ENCODE measurements at regions of chr2 and their contacts with region 1.

Region 1: GRCh38 chr2:64203858-64204632 is 59.8 kb upstream of the PELI1 start:
- DNase-seq: peak; percentile 42
- ATAC-seq: peak; percentile 79
- H3K4me3 Mint-ChIP-seq: peak overlapping the region; percentile 83
- H3K27ac Mint-ChIP-seq: peak overlapping the region; percentile 93
- H3K4me1 Mint-ChIP-seq: peaks cover 72% of the 10 kb centered on the region
- H3K27me3 Mint-ChIP-seq: no peaks in the 10 kb centered on the region
- CTCF ChIP-seq: no peak

Region 2: DNA sequence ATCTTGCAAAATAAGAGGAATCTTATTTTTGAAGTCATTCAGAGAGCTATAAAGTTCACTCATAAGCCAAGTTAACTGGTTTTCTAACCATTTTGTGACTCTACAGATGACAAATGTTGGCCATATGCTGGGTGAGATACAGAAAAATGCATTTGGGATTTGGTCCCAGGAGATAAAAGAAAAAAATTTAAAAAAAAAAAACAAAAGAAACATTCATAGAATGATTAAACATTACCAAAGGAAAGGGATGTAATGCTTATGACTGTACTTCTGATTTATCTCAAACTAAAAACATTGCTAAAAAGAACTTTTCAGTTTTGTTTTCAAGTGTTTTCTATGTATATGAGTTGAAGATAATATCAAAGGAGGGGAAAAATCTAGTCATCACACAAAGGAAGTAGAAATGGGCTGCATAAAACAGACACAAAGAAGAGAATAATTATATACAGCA is 102.9 kb before region 1 on chr2:
- CTCF ChIA-PET with region 1: no interaction called
- POLR2A ChIA-PET with region 1: interaction called, 11 read pairs
- intact Hi-C with region 1: no loop called
- DNase-seq: no peak
- ATAC-seq: no peak
- H3K4me3 Mint-ChIP-seq: peak overlapping the region; percentile 41
- H3K27ac Mint-ChIP-seq: peak overlapping the region; percentile 75
- H3K4me1 Mint-ChIP-seq: peaks cover 63% of the 10 kb centered on the region
- H3K27me3 Mint-ChIP-seq: no peaks in the 10 kb centered on the region
- CTCF ChIP-seq: no peak

Region 3: DNA sequence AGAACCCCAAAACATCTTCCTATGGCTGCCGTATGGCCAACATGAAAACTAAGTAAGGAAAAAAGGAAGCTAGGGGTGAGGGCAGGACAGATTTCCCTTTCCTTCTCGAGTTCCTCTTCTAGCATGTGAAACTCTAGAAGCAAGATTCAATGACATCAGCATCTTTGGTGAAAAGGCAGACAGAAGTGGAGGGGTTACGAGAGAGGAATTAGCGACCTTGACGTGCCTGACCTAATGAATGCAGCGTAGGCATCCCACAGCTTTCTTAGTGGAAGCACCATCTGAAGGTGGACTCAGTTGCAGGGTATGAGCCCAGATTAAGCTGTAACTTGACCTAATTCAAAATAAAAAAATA is 11.9 kb before region 1 on chr2:
- CTCF ChIA-PET with region 1: interaction called, 4 read pairs
- POLR2A ChIA-PET with region 1: interaction called, 8 read pairs
- intact Hi-C with region 1: loop called (anchors 2 kb)
- DNase-seq: no peak
- ATAC-seq: peak; percentile 83
- H3K4me3 Mint-ChIP-seq: peak overlapping the region; percentile 50
- H3K27ac Mint-ChIP-seq: peak overlapping the region; percentile 50
- H3K4me1 Mint-ChIP-seq: peaks cover 41% of the 10 kb centered on the region
- H3K27me3 Mint-ChIP-seq: no peaks in the 10 kb centered on the region
- CTCF ChIP-seq: no peak

Region 4: GRCh38 chr2:64222351-64222750 is 18.3 kb after region 1 on chr2:
- CTCF ChIA-PET with region 1: no interaction called
- POLR2A ChIA-PET with region 1: interaction called, 14 read pairs
- intact Hi-C with region 1: no loop called
- DNase-seq: no peak
- ATAC-seq: no peak
- H3K4me3 Mint-ChIP-seq: no peak overlapping the region
- H3K27ac Mint-ChIP-seq: peak overlapping the region; percentile 95
- H3K4me1 Mint-ChIP-seq: peaks cover 63% of the 10 kb centered on the region
- H3K27me3 Mint-ChIP-seq: no peaks in the 10 kb centered on the region
- CTCF ChIP-seq: no peak

Region 5: GRCh38 chr2:64228126-64228678 is 24.2 kb after region 1 on chr2:
- CTCF ChIA-PET with region 1: no interaction called
- POLR2A ChIA-PET with region 1: interaction called, 14 read pairs
- intact Hi-C with region 1: no loop called
- DNase-seq: peak; percentile 67
- ATAC-seq: peak; percentile 96
- H3K4me3 Mint-ChIP-seq: peak overlapping the region; percentile 93
- H3K27ac Mint-ChIP-seq: peak overlapping the region; percentile 91
- H3K4me1 Mint-ChIP-seq: peaks cover 35% of the 10 kb centered on the region
- H3K27me3 Mint-ChIP-seq: no peaks in the 10 kb centered on the region
- CTCF ChIP-seq: no peak

Region 6: GRCh38 chr2:64337314-64337713 is 133.3 kb after region 1 on chr2:
- CTCF ChIA-PET with region 1: no interaction called
- POLR2A ChIA-PET with region 1: no interaction called
- intact Hi-C with region 1: no loop called
- DNase-seq: no peak
- ATAC-seq: no peak
- H3K4me3 Mint-ChIP-seq: no peak overlapping the region
- H3K27ac Mint-ChIP-seq: no peak overlapping the region
- H3K4me1 Mint-ChIP-seq: no peaks in the 10 kb centered on the region
- H3K27me3 Mint-ChIP-seq: peaks cover 3% of the 10 kb centered on the region
- CTCF ChIP-seq: no peak